PC-3 (cell line): ENCODE measurements at regions of chr5 and their contacts with region 1.

Region 1: DNA sequence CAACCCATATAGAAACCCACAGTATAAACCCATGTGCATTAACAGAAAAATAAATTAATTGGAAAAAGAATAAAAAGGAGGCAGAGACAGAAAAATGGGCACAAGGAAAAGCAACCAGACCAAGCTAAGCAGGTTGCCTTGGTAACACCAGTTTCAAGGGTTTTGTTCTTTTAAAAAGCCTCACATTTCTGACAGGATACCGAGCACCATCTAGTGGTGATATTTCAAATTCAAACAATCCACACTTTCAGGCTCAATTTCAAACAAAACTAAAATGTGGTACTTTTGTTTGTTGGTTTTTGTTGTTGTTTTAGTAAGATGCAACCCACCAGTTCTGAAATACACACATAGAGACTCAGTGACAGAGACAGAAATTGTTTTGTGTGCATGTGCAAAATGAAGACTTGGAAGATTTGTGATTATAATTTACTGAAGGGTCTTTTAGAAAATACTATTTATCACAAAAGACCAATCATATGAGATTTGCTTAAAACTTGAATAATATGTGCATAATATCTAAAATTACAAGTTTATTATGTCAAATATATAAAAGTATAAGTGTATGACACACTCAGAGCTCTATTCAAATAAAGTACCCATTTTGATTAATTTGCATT is 318.2 kb downstream of the SLCO4C1 start:
- DNase-seq: peak; percentile 75
- ATAC-seq: peak; percentile 76
- H3K4me3 ChIP-seq: no peak overlapping the region
- H3K27ac ChIP-seq: no peak overlapping the region
- H3K4me1 ChIP-seq: no peaks in the 10 kb centered on the region
- H3K27me3 ChIP-seq: no peaks in the 10 kb centered on the region
- CTCF ChIP-seq: peak; percentile 91

Region 2: GRCh38 chr5:101590384-101590783 is 387.5 kb before region 1 on chr5:
- CTCF ChIA-PET with region 1: no interaction called
- POLR2A ChIA-PET with region 1: no interaction called
- intact Hi-C with region 1: no loop called
- DNase-seq: peak; percentile 18
- ATAC-seq: no peak
- H3K4me3 ChIP-seq: no peak overlapping the region
- H3K27ac ChIP-seq: no peak overlapping the region
- H3K4me1 ChIP-seq: no peaks in the 10 kb centered on the region
- H3K27me3 ChIP-seq: no peaks in the 10 kb centered on the region
- CTCF ChIP-seq: peak; percentile 61

Region 3: DNA sequence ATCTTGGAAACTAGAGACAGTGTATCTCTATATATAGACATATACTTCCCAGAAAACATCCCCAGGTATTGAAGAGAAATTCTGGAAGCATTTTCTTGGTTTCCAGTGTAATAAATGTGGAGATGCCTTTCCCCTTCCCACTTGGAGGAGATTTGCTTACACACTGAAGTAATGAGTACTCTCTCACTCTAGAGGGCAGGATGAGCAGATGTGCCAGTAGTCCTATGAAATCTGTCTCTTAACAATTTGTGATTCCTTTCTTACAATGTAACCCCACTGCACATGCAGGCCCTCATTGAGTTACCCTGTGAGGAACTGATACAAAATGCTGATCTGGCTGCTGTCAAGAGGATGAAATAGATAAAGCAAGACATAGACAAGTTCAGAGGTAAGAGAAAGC is 248.9 kb before region 1 on chr5:
- CTCF ChIA-PET with region 1: no interaction called
- POLR2A ChIA-PET with region 1: no interaction called
- intact Hi-C with region 1: loop called (anchors 1 kb)
- DNase-seq: no peak
- ATAC-seq: peak; percentile 42; the same call in 1 of the 2 replicates
- H3K4me3 ChIP-seq: no peak overlapping the region
- H3K27ac ChIP-seq: no peak overlapping the region
- H3K4me1 ChIP-seq: no peaks in the 10 kb centered on the region
- H3K27me3 ChIP-seq: no peaks in the 10 kb centered on the region
- CTCF ChIP-seq: peak; percentile 32; the same call in 1 of the 2 replicates

Region 4: DNA sequence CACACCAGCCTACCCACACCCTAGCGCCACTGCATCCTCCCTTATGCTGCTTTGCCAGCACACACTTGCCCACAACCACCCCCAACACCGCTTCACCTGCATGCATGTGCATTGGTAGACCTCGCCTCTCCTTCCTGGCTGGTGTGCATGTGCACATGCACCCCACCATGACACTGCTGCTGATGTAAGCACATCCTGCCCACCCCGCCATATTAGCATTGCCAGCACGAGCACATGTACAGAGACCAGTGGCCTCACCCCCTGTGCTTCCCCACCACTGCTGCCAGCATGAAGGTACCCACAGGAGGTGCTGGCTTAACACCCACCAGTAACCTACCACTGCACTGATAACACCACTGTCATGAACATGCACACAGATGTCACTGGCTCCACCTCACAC is 100.1 kb after region 1 on chr5:
- CTCF ChIA-PET with region 1: no interaction called
- POLR2A ChIA-PET with region 1: no interaction called
- intact Hi-C with region 1: no loop called
- DNase-seq: no peak
- ATAC-seq: no peak
- H3K4me3 ChIP-seq: no peak overlapping the region
- H3K27ac ChIP-seq: no peak overlapping the region
- H3K4me1 ChIP-seq: no peaks in the 10 kb centered on the region
- H3K27me3 ChIP-seq: no peaks in the 10 kb centered on the region
- CTCF ChIP-seq: no peak

Region 5: DNA sequence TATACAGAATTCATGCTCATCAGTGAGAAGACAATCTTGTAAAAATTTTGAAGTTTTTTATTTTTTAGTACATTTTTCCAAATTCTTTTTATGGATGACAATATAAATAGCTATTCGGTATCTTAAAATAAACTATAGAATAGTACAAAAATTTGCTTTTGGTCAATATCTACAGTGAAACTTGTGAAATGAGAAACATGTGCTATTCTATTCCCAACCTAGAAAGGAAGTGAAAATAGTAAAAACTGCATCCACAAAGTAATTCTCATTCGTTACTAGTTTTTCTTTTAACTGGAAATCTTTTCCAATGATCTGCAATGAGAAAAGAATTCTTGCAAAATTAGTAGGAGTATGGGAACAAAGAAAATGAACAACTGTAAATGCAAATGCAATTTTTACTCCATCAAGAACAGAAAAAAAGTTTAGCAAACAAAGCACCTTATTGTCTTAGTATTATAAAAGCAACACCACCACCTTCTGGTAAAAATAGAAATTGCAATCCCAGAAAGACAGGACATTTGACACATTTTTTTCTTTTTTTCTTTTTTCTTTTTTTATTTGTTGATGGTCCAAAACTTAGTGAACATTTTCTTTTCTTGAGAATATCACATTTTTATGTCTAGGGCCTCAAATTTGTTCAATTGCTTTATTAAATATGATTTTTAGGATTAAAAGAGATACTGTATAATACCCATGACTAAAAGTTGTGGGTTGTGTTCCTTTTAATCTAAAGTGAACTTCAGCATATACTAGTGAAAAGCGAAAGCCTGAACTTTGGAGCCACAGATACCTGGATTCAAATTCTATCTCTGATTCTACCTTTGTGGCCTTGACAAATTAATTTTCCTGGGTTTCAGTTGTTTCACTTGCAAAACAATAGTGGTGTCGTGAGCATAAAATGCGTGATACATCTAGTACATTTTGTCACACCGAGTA is 246.0 kb after region 1 on chr5:
- CTCF ChIA-PET with region 1: no interaction called
- POLR2A ChIA-PET with region 1: no interaction called
- intact Hi-C with region 1: loop called (anchors 5 kb)
- DNase-seq: peak; percentile 88
- ATAC-seq: peak; percentile 42; the same call in 1 of the 2 replicates
- H3K4me3 ChIP-seq: no peak overlapping the region
- H3K27ac ChIP-seq: no peak overlapping the region
- H3K4me1 ChIP-seq: no peaks in the 10 kb centered on the region
- H3K27me3 ChIP-seq: peaks cover 25% of the 10 kb centered on the region; the same call in 1 of the 2 replicates
- CTCF ChIP-seq: peak; percentile 95

Region 6: GRCh38 chr5:102241809-102242421 is 264.1 kb after region 1 on chr5:
- CTCF ChIA-PET with region 1: no interaction called
- POLR2A ChIA-PET with region 1: no interaction called
- intact Hi-C with region 1: no loop called
- DNase-seq: no peak
- ATAC-seq: no peak
- H3K4me3 ChIP-seq: no peak overlapping the region
- H3K27ac ChIP-seq: no peak overlapping the region
- H3K4me1 ChIP-seq: no peaks in the 10 kb centered on the region
- H3K27me3 ChIP-seq: 0 out of 2 replicates have a peak, but pooled peaks cover 3% of the 10 kb centered on the region
- CTCF ChIP-seq: no peak